Endothelial cell of umbilical vein (primary cell): ENCODE measurements at regions of chr5 and their contacts with region 1.

Region 1: GRCh38 chr5:81851481-81852178 is 100.7 kb upstream of the SSBP2 start:
- DNase-seq: peak; percentile 94
- H3K4me3 ChIP-seq: peak overlapping the region in 2 of 3 experiments; percentile 40 to 54
- H3K27ac ChIP-seq: peak overlapping the region; percentile 65
- H3K4me1 ChIP-seq: peaks cover 10% of the 10 kb centered on the region
- H3K27me3 ChIP-seq: no peaks in the 10 kb centered on the region
- CTCF ChIP-seq: no peak
- POLR2A ChIP-seq: peak; percentile 88

Region 2: GRCh38 chr5:81506900-81507588 is 344.6 kb before region 1 on chr5:
- CTCF ChIA-PET with region 1: interaction called, 16 read pairs
- POLR2A ChIA-PET with region 1: interaction called, 3 read pairs
- dilution Hi-C with region 1: no loop called
- intact Hi-C with region 1: loop called (anchors 1 kb)
- DNase-seq: peak; percentile 94
- H3K4me3 ChIP-seq: no peak overlapping the region
- H3K27ac ChIP-seq: no peak overlapping the region
- H3K4me1 ChIP-seq: peaks cover 14% of the 10 kb centered on the region
- H3K27me3 ChIP-seq: no peaks in the 10 kb centered on the region
- CTCF ChIP-seq: peak; percentile 78
- POLR2A ChIP-seq: no peak

Region 3: DNA sequence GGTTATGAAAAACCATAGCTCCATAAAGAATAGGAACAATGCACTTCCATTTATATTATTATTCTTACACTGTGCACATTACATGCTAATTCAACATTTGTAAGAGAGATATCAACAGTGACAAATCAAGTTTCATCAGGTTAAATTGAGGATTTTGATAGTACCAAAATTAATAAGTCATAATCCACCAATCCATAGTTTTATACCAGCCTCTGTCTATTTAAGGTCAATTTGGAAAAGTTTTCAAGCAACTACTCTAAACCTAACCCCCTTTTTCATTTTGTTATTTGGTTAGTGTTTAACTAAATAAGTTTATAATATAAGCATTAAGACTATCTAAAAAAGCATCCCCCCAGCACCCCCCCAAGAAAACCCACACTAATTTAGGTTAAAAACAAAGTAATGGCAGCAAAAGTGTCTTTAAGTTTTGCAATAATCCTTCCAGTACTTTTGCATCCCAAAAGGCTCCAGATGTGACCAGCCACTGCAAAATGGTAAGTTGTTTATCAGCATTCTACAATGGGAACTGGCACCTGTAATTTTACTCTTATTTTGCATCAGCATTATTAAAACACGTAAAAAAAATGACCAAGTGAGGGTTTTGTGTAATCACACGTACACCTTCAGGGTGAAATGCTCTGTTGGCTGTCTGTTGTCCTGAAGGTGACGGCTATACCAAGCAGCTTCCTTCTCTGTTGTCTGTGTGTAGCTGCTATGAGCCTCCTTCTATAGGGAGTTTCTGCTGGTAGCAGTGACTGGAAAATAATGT is 64.0 kb before region 1 on chr5:
- CTCF ChIA-PET with region 1: interaction called, 27 read pairs
- POLR2A ChIA-PET with region 1: interaction called, 3 read pairs
- dilution Hi-C with region 1: no loop called
- intact Hi-C with region 1: loop called (anchors 1 kb)
- DNase-seq: peak; percentile 77
- H3K4me3 ChIP-seq: no peak overlapping the region
- H3K27ac ChIP-seq: no peak overlapping the region
- H3K4me1 ChIP-seq: no peaks in the 10 kb centered on the region
- H3K27me3 ChIP-seq: no peaks in the 10 kb centered on the region
- CTCF ChIP-seq: no peak
- POLR2A ChIP-seq: no peak

Region 4: GRCh38 chr5:81838307-81838906 is 13.2 kb before region 1 on chr5:
- CTCF ChIA-PET with region 1: interaction called, 13 read pairs
- POLR2A ChIA-PET with region 1: no interaction called
- dilution Hi-C with region 1: no loop called
- intact Hi-C with region 1: no loop called
- DNase-seq: peak; percentile 34
- H3K4me3 ChIP-seq: no peak overlapping the region
- H3K27ac ChIP-seq: no peak overlapping the region
- H3K4me1 ChIP-seq: no peaks in the 10 kb centered on the region
- H3K27me3 ChIP-seq: no peaks in the 10 kb centered on the region
- CTCF ChIP-seq: peak in 1 of 2 donors; percentile 46
- POLR2A ChIP-seq: no peak

Region 5: GRCh38 chr5:81971712-81972495 is 120.3 kb after region 1 on chr5 and contains the start of gene ATG10:
- CTCF ChIA-PET with region 1: no interaction called
- POLR2A ChIA-PET with region 1: interaction called, 4 read pairs
- dilution Hi-C with region 1: no loop called
- intact Hi-C with region 1: loop called (anchors 2 kb)
- DNase-seq: peak; percentile 96
- H3K4me3 ChIP-seq: peak within 1 kb of the TSS; percentile 64 to 89 (median 71)
- H3K27ac ChIP-seq: peak within 1 kb of the TSS; percentile 71
- H3K4me1 ChIP-seq: no peaks in the 10 kb centered on the region
- H3K27me3 ChIP-seq: no peaks in the 10 kb centered on the region
- CTCF ChIP-seq: no peak
- POLR2A ChIP-seq: peak; percentile 89
- total RNA-seq, gene ATG10: 3.9 and 5.9 TPM in 2 replicates

Region 6: DNA sequence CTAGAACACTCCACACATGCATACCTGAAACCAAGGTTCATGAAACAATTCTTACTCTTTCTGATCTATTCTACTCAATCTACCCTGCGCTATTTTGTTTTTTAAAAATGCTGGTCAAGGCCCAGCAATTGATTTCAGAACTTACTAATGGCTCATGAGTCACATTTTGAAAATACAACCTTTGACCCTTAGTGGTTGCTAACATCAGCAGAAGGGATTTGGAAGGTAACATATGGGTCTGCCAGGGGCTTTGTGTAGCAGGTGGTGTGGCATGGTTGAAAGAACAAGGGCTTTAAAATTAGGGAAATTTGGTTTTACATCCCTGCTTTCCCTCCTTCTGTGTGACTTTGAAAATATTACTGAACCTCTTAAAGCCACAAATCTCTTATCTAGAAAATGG is 221.5 kb after region 1 on chr5:
- CTCF ChIA-PET with region 1: no interaction called
- POLR2A ChIA-PET with region 1: no interaction called
- dilution Hi-C with region 1: no loop called
- intact Hi-C with region 1: no loop called
- DNase-seq: no peak
- H3K4me3 ChIP-seq: no peak overlapping the region
- H3K27ac ChIP-seq: no peak overlapping the region
- H3K4me1 ChIP-seq: no peaks in the 10 kb centered on the region
- H3K27me3 ChIP-seq: no peaks in the 10 kb centered on the region
- CTCF ChIP-seq: no peak
- POLR2A ChIP-seq: no peak

Region 7: GRCh38 chr5:82225525-82226172 is 374.0 kb after region 1 on chr5:
- CTCF ChIA-PET with region 1: no interaction called
- POLR2A ChIA-PET with region 1: no interaction called
- dilution Hi-C with region 1: no loop called
- intact Hi-C with region 1: loop called (anchors 1 kb)
- DNase-seq: peak; percentile 78
- H3K4me3 ChIP-seq: no peak overlapping the region
- H3K27ac ChIP-seq: no peak overlapping the region
- H3K4me1 ChIP-seq: peaks cover 2% of the 10 kb centered on the region
- H3K27me3 ChIP-seq: no peaks in the 10 kb centered on the region
- CTCF ChIP-seq: peak; percentile 66 to 85
- POLR2A ChIP-seq: no peak

Region 8: GRCh38 chr5:82917584-82917983 is 1066.0 kb after region 1 on chr5:
- CTCF ChIA-PET with region 1: no interaction called
- POLR2A ChIA-PET with region 1: no interaction called
- dilution Hi-C with region 1: no loop called
- intact Hi-C with region 1: no loop called
- DNase-seq: no peak
- H3K4me3 ChIP-seq: no peak overlapping the region
- H3K27ac ChIP-seq: no peak overlapping the region
- H3K4me1 ChIP-seq: no peaks in the 10 kb centered on the region
- H3K27me3 ChIP-seq: no peaks in the 10 kb centered on the region
- CTCF ChIP-seq: no peak
- POLR2A ChIP-seq: no peak